Heart left ventricle (tissue), 16 donors: ENCODE measurements at regions of chr10 and their contacts with region 1.

Region 1: DNA sequence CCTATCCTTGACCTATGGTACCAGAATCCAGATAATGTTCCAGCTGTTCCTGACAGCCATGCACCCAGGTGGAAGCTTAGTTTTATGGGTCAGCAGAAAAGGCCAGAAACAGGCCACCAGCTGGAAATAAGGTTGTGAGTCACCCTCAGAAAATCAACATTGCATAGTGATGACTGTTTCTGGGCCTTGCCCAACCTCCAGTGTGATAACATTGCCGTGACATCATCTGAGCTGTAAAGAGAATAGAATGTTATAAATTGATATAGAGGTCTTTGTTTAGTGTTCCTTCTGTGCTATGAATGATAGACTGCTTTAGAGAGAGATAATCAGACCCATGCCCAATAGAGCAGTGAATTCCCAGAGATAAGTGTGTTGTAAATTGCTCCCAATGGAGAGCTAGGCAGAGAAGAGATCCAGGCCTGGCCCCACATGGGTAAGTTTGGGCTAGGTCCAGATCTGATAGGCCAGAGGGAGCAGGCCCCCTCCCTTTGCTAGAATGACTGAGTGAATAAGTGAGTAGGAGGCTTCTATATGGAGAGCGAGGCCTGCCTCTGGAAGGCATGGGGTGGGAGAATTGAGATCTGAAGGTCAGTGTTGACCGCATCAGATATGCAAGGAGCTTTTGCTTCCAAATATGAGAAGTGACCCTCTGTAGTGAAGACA is 14.2 kb upstream of the HPS1 start:
- DNase-seq: peak in 4 of 5 donors; percentile 51 to 71 (median 56)
- ATAC-seq: peak; percentile 91 to 96 (median 92)
- H3K4me3 ChIP-seq: no peak overlapping the region
- H3K27ac ChIP-seq: peak overlapping the region; percentile 11 to 88 (median 70)
- H3K4me1 ChIP-seq: peaks cover 0 to 25% (median 12%) of the 10 kb centered on the region in 12 donors
- H3K27me3 ChIP-seq: peaks cover 0 to 16% (median 0%) of the 10 kb centered on the region in 9 donors
- CTCF ChIP-seq: no peak
- POLR2A ChIP-seq: no peak

Region 2: GRCh38 chr10:98269072-98269912 is 191.7 kb before region 1 on chr10:
- intact Hi-C with region 1: loop called in 1 of 10 experiments (anchors 5 kb)
- DNase-seq: peak; percentile 84 to 92 (median 86)
- ATAC-seq: peak; percentile 92 to 95 (median 94)
- H3K4me3 ChIP-seq: peak overlapping the region in 7 of 12 donors; percentile 50 to 69 (median 62)
- H3K27ac ChIP-seq: peak overlapping the region; percentile 56 to 89 (median 86)
- H3K4me1 ChIP-seq: peaks cover 0 to 34% (median 22%) of the 10 kb centered on the region in 12 donors
- H3K27me3 ChIP-seq: peaks cover 0 to 18% (median 0%) of the 10 kb centered on the region in 9 donors
- CTCF ChIP-seq: no peak
- POLR2A ChIP-seq: no peak

Region 3: GRCh38 chr10:98285416-98285815 is 175.6 kb before region 1 on chr10:
- intact Hi-C with region 1: no loop called
- DNase-seq: no peak
- ATAC-seq: peak in 1 of 4 donors; percentile 26
- H3K4me3 ChIP-seq: no peak overlapping the region
- H3K27ac ChIP-seq: no peak overlapping the region
- H3K4me1 ChIP-seq: no peaks in the 10 kb centered on the region
- H3K27me3 ChIP-seq: peaks cover 0 to 5% (median 0%) of the 10 kb centered on the region in 9 donors
- CTCF ChIP-seq: no peak
- POLR2A ChIP-seq: no peak

Region 4: GRCh38 chr10:98431016-98431415 is 30.0 kb before region 1 on chr10:
- intact Hi-C with region 1: loop called in 1 of 10 experiments (anchors 2 kb)
- DNase-seq: peak; percentile 53 to 93 (median 85)
- ATAC-seq: peak; percentile 91 to 99 (median 96)
- H3K4me3 ChIP-seq: no peak overlapping the region
- H3K27ac ChIP-seq: peak overlapping the region in 9 of 12 donors; percentile 61 to 85 (median 69)
- H3K4me1 ChIP-seq: peaks cover 0 to 14% (median 2%) of the 10 kb centered on the region in 12 donors
- H3K27me3 ChIP-seq: no peaks in the 10 kb centered on the region
- CTCF ChIP-seq: no peak
- POLR2A ChIP-seq: no peak

Region 5: DNA sequence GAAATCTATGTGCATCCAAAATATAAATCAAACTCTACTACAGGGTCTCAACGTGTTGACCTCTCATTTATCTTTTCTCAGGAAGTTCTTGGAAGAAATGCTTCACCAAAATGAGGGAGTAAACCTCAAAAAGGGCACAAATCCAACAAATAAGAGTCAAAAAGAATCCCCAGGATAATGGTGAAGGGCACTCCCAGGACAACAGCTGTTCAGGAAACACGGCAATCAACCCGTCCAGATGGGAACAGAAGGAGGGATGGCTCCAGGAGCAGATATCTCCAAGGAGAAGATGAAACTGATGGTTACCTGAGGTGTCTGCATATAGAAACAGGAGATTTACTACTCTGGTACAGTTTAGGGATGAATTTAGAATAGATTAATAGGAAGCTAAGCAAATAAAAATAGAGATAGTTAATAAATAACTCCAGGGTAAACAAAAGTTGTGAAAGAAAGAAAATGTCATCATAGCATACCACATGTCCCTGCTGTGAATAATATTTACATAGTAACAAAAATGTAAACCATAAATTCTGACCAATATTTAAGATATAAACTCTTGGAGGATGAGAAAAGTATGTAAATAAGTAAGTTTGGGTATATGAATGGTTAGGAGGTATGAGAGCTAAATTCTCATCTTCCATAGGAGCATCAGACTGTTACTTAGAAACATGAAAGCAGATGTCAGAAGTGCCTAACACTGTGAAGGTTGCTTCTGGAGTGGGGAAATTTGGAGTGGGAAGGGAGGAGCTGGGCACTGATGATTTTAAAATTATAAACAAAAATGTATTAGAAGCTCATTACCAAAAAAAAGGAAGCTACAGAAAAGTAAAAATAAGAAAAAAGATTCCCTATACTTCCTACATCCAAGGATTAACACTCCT is 223.3 kb after region 1 on chr10:
- intact Hi-C with region 1: no loop called
- DNase-seq: no peak
- ATAC-seq: no peak
- H3K4me3 ChIP-seq: no peak overlapping the region
- H3K27ac ChIP-seq: no peak overlapping the region
- H3K4me1 ChIP-seq: no peaks in the 10 kb centered on the region
- H3K27me3 ChIP-seq: peaks cover 0 to 4% (median 0%) of the 10 kb centered on the region in 9 donors
- CTCF ChIP-seq: no peak
- POLR2A ChIP-seq: no peak

Region 6: GRCh38 chr10:98720551-98720950 is 259.6 kb after region 1 on chr10:
- intact Hi-C with region 1: no loop called
- DNase-seq: no peak
- ATAC-seq: no peak
- H3K4me3 ChIP-seq: no peak overlapping the region
- H3K27ac ChIP-seq: no peak overlapping the region
- H3K4me1 ChIP-seq: no peaks in the 10 kb centered on the region
- H3K27me3 ChIP-seq: no peaks in the 10 kb centered on the region
- CTCF ChIP-seq: no peak
- POLR2A ChIP-seq: no peak